Activated CD4-positive, alpha-beta T cell treated with anti-CD3 and anti-CD28 coated beads for 36 hours (primary cell): ENCODE measurements at regions of chr1 and their contacts with region 1.

Region 1: GRCh38 chr1:11907275-11908094 is 18.7 kb downstream of the KIAA2013 start:
- DNase-seq: peak; percentile 95
- ATAC-seq: peak; percentile 57
- H3K4me3 Mint-ChIP-seq: peak overlapping the region; percentile 81
- H3K27ac Mint-ChIP-seq: peak overlapping the region; percentile 99
- H3K4me1 Mint-ChIP-seq: peaks cover 37% of the 10 kb centered on the region
- H3K27me3 Mint-ChIP-seq: peaks cover 12% of the 10 kb centered on the region

Region 2: DNA sequence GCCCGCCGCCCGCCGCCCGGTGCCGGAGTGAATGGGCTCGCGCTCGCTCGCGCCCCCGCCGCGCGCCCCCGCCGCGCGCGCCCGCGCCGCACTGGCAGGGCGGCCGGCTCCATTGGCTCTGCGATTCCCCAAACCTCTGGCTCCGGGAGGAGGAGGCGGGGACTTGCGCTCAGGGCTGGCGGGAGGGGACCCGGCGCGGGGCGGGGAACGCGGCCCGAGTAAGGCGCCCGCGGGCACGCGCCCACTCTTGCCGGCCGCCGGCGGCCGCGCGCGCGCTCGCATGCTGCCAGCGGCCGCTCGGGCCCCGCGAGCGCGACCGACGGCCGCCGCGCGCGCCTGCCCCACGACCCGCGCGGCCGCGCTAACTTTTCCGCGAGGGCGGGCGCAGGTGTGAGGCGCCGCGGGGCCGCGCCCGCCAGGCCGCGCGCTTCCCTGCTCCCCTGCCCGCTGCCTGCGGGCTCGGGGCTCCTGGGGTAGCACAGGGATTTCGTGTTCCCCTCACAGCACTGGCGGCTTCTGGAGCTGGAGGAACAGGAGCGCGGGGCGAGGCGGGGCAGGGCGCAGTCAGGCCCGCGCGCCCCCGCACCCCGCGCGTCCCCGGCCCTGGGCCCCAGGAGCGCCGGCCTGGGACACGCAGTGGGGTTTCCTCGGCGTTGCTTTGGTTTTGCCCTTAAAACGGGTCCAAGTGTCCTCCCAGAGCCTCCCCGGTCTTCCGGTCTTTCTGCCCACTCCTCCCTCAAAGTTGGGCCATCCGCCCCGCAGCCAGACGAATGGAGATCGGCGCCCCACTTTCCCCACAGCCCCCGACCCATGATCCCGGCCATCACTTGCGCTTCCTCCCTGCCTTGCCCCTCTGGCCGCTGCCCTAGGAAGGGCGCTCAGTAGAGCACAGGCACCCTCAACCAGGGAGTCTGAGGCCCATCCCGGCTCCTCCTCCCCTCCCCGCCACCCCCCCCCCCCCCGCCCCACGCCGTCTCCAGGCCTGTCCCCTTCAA is 1212.6 kb before region 1 on chr1:
- CTCF ChIA-PET with region 1: no interaction called
- POLR2A ChIA-PET with region 1: no interaction called
- intact Hi-C with region 1: loop called in 1 of 2 experiments (anchors 5 kb)
- DNase-seq: peak; percentile 83
- ATAC-seq: peak; percentile 55
- H3K4me3 Mint-ChIP-seq: peak overlapping the region; percentile 57
- H3K27ac Mint-ChIP-seq: no peak overlapping the region
- H3K4me1 Mint-ChIP-seq: peaks cover 36% of the 10 kb centered on the region
- H3K27me3 Mint-ChIP-seq: peaks cover 2% of the 10 kb centered on the region

Region 3: DNA sequence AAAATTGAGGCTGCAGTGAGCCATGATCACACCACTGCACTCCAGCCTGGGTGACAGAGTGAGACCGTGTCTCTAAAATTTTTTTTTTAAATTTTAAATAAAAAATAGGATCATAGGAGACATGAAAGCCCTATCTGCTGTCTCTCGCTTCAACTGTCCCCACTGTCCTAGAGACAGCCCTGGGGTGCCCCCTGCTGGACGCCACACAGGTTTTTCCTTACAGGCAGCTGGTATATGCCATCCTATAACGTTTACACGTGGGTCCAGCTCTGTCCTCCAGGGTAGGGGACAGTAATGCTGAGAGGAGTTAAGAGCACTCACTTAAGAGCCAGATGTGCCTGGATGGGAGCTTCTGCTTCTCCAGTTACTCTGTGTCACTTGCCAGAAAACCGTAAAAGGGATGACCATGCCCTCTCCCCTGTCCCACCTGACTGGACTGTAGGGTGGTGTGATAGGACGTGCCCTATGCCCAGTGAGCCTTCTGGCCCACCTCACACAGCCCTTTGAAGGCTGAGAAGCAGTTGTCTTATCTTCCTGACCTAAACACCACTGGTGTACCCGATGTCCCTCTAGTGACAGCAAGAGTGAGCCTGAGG is 261.7 kb before region 1 on chr1:
- CTCF ChIA-PET with region 1: no interaction called
- POLR2A ChIA-PET with region 1: interaction called, 4 read pairs
- intact Hi-C with region 1: loop called in 1 of 2 experiments (anchors 5 kb)
- DNase-seq: peak; percentile 93
- ATAC-seq: peak; percentile 57
- H3K4me3 Mint-ChIP-seq: no peak overlapping the region
- H3K27ac Mint-ChIP-seq: no peak overlapping the region
- H3K4me1 Mint-ChIP-seq: peaks cover 10% of the 10 kb centered on the region
- H3K27me3 Mint-ChIP-seq: no peaks in the 10 kb centered on the region

Region 4: DNA sequence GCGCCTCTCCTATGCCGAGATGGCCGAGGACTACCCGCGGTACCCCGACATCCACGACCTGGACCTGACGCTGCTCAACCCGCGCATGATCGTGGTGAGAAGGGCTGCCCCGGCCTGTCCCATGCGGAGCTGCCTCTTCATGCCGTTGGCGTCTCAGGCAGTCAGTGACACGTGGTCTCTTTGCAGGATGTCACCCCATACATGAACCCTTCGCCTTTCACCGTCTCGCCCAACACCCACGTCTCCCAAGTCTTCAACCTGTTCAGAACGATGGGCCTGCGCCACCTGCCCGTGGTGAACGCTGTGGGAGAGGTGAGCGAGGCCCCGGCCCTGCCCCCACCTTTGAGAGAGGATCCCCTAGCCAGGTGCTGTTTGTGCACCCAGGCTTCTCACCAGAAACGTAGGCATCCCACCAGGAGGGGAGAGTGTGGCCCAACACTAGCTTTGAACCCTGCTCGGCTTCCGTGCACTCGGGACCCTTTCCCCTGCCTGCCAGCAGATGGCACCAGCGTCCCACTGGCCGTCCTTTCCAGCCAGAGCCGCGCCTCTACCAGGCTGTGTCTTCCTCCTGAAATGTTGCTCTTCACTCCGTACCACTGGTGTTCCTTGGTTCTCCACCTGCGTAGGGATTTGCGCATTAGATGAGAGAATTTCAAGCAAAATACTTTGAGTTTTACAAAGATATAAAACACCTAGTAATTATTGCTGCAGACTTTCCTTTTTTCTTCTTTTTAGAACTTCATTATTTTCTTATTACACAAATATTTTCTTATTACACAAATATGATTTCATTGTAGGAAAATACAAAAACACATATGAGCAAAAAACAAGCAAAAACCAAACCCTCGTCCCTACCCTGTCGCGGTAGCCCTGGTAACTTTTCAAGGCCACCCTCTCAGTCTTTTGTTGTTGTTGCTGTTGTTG is 68.9 kb before region 1 on chr1:
- CTCF ChIA-PET with region 1: interaction called, 3 read pairs
- POLR2A ChIA-PET with region 1: interaction called, 11 read pairs
- intact Hi-C with region 1: loop called (anchors 1 to 2 kb)
- DNase-seq: peak; percentile 86
- ATAC-seq: peak; percentile 98
- H3K4me3 Mint-ChIP-seq: no peak overlapping the region
- H3K27ac Mint-ChIP-seq: no peak overlapping the region
- H3K4me1 Mint-ChIP-seq: no peaks in the 10 kb centered on the region
- H3K27me3 Mint-ChIP-seq: no peaks in the 10 kb centered on the region

Region 5: DNA sequence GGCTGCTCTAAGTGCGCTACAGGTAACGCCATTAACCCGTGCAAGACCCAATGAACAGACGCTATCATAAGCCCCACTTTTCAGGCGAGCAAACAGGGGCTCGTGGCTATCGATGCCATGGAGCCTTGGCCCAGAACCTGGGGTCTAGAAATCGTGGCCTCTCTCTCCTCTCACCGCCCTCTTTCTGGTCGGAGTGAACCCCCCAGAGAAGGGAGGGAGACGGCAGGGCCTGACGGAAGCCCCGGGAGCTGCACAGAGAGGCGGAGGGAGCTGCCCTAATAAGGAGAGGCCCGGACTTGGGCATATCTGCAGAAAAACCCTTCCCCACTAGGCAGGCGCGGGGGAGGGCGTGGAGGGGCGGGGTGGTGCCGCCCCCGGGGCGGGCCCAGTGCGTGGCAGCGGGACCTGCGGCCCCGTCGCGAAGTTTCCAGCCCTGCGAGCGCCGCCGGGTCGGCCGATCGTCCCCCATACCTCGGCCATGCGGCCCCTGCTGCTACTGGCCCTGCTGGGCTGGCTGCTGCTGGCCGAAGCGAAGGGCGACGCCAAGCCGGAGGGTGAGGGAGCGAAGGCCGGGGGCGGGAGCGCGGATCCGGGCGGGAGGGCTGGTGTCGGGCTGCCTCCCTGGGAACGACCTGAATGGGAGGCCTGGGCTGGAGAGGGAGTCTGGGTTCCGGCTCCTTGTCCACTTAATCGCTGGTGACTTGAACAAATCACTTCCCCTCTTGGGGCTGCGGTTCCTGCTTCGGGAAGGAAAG is 27.0 kb after region 1 on chr1 and contains the start of gene PLOD1:
- CTCF ChIA-PET with region 1: no interaction called
- POLR2A ChIA-PET with region 1: interaction called, 27 read pairs
- intact Hi-C with region 1: loop called in 1 of 2 experiments (anchors 2 kb)
- DNase-seq: peak; percentile 88
- ATAC-seq: peak; percentile 98
- H3K4me3 Mint-ChIP-seq: peak within 1 kb of the TSS; percentile 75
- H3K27ac Mint-ChIP-seq: no peak within 1 kb of the TSS
- H3K4me1 Mint-ChIP-seq: peaks cover 4% of the 10 kb centered on the region
- H3K27me3 Mint-ChIP-seq: no peaks in the 10 kb centered on the region
- total RNA-seq, gene PLOD1: 11.7 to 11.9 TPM

Region 6: GRCh38 chr1:12047120-12047876 is 139.8 kb after region 1 on chr1:
- CTCF ChIA-PET with region 1: no interaction called
- POLR2A ChIA-PET with region 1: interaction called, 35 read pairs
- intact Hi-C with region 1: loop called in 1 of 2 experiments (anchors 5 kb)
- DNase-seq: peak; percentile 86
- ATAC-seq: peak; percentile 79
- H3K4me3 Mint-ChIP-seq: no peak overlapping the region
- H3K27ac Mint-ChIP-seq: no peak overlapping the region
- H3K4me1 Mint-ChIP-seq: peaks cover 22% of the 10 kb centered on the region
- H3K27me3 Mint-ChIP-seq: peaks cover 6% of the 10 kb centered on the region

Region 7: GRCh38 chr1:12448746-12449177 is 541.3 kb after region 1 on chr1:
- CTCF ChIA-PET with region 1: no interaction called
- POLR2A ChIA-PET with region 1: no interaction called
- intact Hi-C with region 1: loop called in 1 of 2 experiments (anchors 1 kb)
- DNase-seq: no peak
- ATAC-seq: no peak
- H3K4me3 Mint-ChIP-seq: peak overlapping the region; percentile 24
- H3K27ac Mint-ChIP-seq: peak overlapping the region; percentile 76
- H3K4me1 Mint-ChIP-seq: peaks cover 69% of the 10 kb centered on the region
- H3K27me3 Mint-ChIP-seq: peaks cover 10% of the 10 kb centered on the region